Activated T-helper 2 cell treated with anti-CD3 and anti-CD28 coated beads, Interferon-gamma antibody, Interleukin-2, Interleukin-4, amounts not matched to agents 10 μg/mL and 5 μg/mL and 100 μg/mL, durations not matched to agents 14 hours and 24 hours and 36 hours (primary cell): ENCODE measurements at regions of chr2 and their contacts with region 1.

Region 1: DNA sequence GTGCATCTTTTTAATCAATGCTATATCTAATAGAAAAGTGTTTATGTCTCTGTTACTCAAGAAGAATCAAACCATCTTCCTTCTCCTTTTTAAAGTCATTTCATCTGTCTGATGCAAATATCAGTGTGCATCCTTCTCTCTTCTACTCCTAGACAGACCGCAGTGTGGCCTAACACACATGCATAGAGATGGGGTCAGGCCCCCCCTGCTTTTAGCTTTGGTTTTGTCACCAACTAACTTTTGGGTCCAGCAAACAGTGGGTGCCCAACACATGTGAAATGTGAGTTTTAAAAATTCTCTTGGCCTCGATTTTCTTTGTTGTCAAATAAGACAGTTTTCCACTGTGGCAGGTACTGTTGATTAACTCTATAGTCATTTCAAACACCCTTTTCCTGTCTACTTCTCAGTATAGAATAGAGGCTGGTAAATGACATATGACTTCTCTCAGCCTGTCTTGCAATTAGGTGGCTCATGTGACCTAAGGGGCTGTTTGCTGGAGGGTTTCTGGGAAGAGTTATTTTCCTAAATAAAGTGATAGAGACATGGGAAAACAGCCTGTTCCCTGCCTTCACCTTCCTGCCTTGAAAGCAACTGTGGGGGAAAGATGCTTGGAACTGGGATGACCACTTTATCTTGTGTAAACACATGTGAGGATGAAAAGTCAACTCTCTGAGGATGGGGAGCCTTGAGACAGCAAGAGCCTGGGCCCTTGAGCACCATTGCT is 65.7 kb upstream of the DARS1 start:
- DNase-seq: peak; percentile 22
- H3K4me3 Mint-ChIP-seq: peak overlapping the region; percentile 10
- H3K27ac Mint-ChIP-seq: peak overlapping the region; percentile 91
- H3K4me1 Mint-ChIP-seq: peaks cover 72% of the 10 kb centered on the region
- H3K27me3 Mint-ChIP-seq: no peaks in the 10 kb centered on the region

Region 2: DNA sequence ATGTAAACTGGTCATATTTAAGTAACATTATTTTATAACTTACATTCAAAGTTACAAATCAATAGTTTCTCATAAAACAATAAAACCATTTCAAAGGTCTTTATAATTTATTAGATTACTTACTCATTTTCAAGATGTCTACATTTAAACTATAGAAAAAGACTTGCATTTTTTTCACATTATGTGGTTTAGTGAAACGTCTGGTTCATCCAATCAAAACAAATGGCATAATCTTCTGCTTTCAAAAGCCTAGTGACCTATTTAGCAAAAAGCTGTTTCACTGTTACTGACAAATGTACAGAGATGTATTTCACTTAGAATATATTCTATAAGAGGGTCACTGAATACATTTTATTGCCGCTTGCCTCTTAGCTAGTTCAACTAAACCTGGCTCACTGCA is 125.6 kb before region 1 on chr2:
- intact Hi-C with region 1: no loop called
- DNase-seq: no peak
- H3K4me3 Mint-ChIP-seq: no peak overlapping the region
- H3K27ac Mint-ChIP-seq: no peak overlapping the region
- H3K4me1 Mint-ChIP-seq: peaks cover 27% of the 10 kb centered on the region
- H3K27me3 Mint-ChIP-seq: no peaks in the 10 kb centered on the region

Region 3: DNA sequence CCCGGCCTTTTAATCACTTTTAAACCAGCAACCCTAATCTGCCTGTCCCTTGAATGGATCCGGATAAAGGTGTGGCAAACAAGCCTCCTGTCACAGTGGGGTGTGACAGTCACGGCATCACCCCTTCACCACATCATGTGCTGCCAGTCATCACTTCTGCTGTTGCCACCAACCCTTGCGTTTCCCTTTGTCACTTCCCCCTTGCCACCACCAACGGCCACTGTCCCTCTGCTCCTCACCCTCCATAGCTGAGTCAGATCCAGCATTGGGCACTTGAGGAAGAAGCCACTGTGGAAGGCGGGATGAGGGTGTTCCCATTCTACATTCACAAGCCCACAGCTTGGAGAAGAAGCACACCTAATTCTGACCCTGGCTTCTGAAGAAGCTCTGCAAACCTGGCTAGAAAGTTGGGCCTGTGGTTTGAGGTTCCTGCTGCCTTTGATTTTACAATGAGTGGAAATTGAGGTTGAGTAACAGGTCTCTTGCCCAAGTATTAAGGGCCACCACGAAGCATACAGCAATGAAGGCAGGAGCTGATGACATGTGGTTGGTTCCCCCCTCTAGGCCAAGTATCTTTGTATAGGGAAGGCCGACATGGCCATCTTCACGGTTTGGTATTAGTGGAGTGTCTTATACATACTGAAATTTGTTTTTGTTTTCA is 42.8 kb before region 1 on chr2:
- intact Hi-C with region 1: loop called (anchors 2 kb)
- DNase-seq: peak; percentile 63
- H3K4me3 Mint-ChIP-seq: peak overlapping the region; percentile 7
- H3K27ac Mint-ChIP-seq: peak overlapping the region; percentile 80
- H3K4me1 Mint-ChIP-seq: peaks cover 34% of the 10 kb centered on the region
- H3K27me3 Mint-ChIP-seq: no peaks in the 10 kb centered on the region

Region 4: GRCh38 chr2:136086253-136087016 is 35.3 kb after region 1 on chr2:
- intact Hi-C with region 1: no loop called
- DNase-seq: no peak
- H3K4me3 Mint-ChIP-seq: no peak overlapping the region
- H3K27ac Mint-ChIP-seq: no peak overlapping the region
- H3K4me1 Mint-ChIP-seq: peaks cover 8% of the 10 kb centered on the region
- H3K27me3 Mint-ChIP-seq: no peaks in the 10 kb centered on the region